ENCODE measurements at regions of chrX and their contacts with region 1.

Region 1: DNA sequence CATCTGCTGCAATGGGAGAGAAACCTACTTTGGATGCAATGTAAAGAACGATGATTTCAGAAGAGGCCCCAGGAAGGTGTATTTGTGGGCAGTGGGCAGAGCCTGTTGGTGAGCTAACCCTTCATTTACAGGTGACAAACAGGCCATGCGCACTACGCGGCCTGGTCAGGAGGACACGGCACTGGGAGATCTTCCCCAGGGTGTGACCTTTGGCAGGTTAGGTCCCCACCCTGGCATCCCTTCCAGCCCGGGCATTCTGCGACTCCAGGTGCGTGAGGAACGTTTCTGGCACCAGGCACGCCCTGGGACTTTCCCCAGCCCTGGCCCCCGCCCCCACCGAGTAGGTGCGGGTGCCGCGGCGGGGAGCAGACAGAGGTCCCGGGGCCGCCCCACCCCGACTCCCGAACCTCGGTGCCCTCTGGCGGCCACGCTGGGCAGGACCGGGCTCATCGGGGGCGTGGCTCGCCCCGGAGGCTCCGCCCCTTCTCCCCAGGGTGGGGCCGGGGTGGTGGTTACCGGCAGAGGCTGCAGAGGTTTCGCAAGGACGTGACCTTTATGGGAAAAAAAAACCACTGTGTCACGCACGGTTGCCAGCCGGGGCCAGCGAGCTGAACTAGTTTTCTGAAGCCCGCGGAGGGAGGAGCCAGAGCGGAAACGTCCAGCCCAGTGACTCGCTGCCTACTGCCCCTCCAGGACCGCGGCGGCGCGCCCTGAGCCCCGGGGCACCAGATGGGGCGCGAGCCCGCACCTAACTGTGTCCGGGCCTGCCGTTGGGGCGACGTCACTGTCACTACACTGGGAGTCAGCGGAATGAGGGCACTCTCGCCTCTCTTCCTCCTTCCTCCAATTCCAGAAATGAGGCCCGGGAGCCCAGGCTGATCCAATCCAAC is 5.0 kb upstream of the NYX start:
- DNase-seq: peak; percentile 84 to 93
- ATAC-seq: peak; percentile 85 to 95
- H3K4me3 ChIP-seq: peak overlapping the region; percentile 34 to 57 (median 40)
- H3K27ac ChIP-seq: peak overlapping the region; percentile 75 to 92 (median 82)
- H3K4me1 ChIP-seq: peaks cover 0 to 7% of the 10 kb centered on the region in 2 donors
- H3K27me3 ChIP-seq: no peaks in the 10 kb centered on the region
- CTCF ChIP-seq: peak; percentile 60 to 86 (median 65)
- POLR2A ChIP-seq: peak; percentile 68 to 73

Region 2: DNA sequence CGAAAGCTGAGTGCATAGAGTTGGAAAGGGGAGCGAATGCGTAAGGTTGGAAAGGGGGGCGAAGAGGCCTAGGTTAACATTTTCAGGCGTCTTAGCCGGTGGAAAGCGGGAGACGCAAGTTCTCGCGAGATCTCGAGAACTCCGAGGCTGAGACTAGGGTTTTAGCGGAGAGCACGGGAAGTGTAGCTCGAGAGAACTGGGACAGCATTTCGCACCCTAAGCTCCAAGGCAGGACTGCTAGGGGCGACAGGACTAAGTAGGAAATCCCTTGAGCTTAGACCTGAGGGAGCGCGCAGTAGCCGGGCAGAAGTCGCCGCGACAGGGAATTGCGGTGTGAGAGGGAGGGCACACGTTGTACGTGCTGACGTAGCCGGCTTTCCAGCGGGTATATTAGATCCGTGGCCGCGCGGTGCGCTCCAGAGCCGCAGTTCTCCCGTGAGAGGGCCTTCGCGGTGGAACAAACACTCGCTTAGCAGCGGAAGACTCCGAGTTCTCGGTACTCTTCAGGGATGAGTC is 108.4 kb before region 1 on chrX and contains the start of gene DDX3X:
- in situ Hi-C with region 1: loop called in 1 of 4 experiments (anchors 10 kb)
- intact Hi-C with region 1: loop called (anchors 2 kb)
- DNase-seq: peak; percentile 62 to 80
- ATAC-seq: peak; percentile 76 to 79
- H3K4me3 ChIP-seq: peak within 1 kb of the TSS; percentile 73 to 96 (median 84)
- H3K27ac ChIP-seq: peak within 1 kb of the TSS; percentile 93 to 99 (median 98)
- H3K4me1 ChIP-seq: peaks cover 11 to 32% of the 10 kb centered on the region in 2 donors
- H3K27me3 ChIP-seq: no peaks in the 10 kb centered on the region
- CTCF ChIP-seq: peak in 4 of 5 experiments; percentile 5 to 51 (median 42)
- POLR2A ChIP-seq: peak; percentile 99
- total RNA-seq, gene DDX3X: 196 to 331 (median 272) TPM

Measured in gastrocnemius medialis (tissue), 4 donors.